ENCODE measurements at regions of chr6 and their contacts with region 1.

Region 1: DNA sequence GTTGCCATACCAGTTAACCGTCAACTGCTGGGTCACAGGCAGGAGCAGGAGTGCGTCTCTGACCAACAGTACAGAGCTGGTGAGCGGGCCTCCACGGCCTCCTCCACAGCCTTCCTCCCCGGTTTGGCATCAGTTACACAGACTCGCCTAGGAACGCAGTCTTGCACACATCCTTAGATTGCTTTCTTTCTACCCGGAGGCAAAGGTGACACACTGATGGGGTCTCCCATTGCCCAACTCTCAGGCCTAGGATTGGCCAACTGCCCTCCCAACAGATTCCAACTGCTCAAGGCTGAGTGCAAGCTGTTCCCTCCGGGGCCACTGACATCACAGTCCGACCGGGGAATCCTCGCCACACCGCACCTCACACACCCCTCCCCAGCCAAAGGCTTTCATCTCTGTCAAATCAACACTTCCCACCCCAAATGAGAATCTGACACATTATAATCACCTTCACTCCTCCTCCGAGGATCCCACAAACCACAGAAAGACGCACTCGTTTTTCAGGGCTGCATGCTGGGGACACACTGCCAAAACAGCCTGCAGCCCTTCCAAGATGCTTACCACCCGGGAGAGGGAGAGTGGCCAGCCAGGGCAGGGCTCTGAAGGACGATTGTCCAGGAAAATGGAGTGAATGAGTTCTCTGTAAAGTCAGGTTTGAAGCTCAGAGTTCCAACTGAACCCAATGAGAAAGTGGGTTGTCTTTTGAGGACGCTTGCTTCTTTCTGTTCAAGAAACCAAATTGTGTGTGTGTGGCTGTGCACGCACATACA is 63.1 kb downstream of the PDE10A start:
- DNase-seq: no peak
- ATAC-seq: peak in 3 of 8 donors; percentile 29 to 58 (median 45)
- H3K4me3 ChIP-seq: no peak overlapping the region
- H3K27ac ChIP-seq: no peak overlapping the region
- H3K4me1 ChIP-seq: peaks cover 0 to 27% (median 7%) of the 10 kb centered on the region in 9 donors
- H3K27me3 ChIP-seq: no peaks in the 10 kb centered on the region
- CTCF ChIP-seq: no peak

Region 2: DNA sequence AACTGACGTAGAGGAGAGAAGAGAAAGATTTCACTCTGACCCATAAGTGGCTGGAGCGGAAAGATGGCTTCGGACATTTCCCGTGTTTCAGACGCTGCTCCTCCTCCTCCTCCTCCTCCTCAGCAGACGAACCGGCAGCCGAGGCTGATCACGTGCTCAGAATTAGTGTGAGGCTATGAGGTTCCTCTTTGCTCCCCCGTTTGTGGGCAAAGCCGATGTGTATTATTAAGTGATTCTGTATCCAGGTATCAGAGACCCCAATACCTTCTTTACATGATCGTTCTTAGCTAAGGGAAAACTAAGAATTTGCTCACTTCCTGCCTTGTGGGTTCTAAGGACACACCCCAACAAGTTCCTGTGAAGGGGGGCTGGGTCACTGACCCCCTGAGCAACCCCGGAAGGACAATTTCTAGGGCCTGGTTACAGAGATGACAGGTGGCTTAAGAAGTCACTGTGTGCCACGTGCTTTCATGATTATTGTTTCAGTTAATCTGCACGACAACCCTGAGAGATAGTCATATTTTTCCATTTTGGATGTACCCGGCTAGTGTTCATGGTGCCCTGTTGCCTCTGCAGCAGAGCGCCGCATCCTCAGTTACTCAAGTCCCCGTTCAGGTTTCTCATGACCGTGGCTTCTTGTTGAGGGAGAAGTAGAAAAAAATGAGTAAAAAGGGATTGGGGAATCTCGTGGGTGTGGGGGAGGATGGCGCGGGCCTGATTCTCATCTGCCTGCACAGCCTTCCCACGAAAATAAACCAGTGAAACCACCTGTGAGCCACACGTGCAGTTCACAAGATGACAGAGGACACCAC is 1513.6 kb before region 1 on chr6:
- intact Hi-C with region 1: no loop called
- DNase-seq: no peak
- ATAC-seq: peak; percentile 34 to 68 (median 60)
- H3K4me3 ChIP-seq: peak overlapping the region in 5 of 10 donors; percentile 16 to 42 (median 24)
- H3K27ac ChIP-seq: peak overlapping the region; percentile 86 to 93 (median 92)
- H3K4me1 ChIP-seq: peaks cover 9 to 27% (median 20%) of the 10 kb centered on the region in 9 donors
- H3K27me3 ChIP-seq: no peaks in the 10 kb centered on the region
- CTCF ChIP-seq: no peak

Region 3: DNA sequence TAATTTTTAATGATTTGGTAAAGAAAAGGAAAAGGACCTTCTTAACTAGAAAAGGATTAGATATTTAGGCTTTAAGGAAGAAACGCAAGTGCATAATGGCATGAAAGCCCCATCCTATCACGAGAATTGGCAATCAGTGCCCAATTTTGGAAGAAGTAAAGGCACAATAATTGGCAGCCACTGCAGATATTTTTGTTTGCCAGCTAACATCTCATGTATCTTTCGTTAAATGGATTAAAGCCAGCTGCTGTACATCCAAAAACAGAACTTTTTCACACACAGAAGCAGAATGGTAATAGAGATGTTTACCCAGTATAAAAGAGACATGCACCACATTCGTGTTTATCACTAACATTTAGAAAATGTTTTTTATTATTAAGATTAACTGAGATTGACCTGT is 470.8 kb before region 1 on chr6:
- intact Hi-C with region 1: no loop called
- DNase-seq: no peak
- ATAC-seq: no peak
- H3K4me3 ChIP-seq: no peak overlapping the region
- H3K27ac ChIP-seq: no peak overlapping the region
- H3K4me1 ChIP-seq: no peaks in the 10 kb centered on the region
- H3K27me3 ChIP-seq: no peaks in the 10 kb centered on the region
- CTCF ChIP-seq: no peak

Region 4: GRCh38 chr6:166411721-166412151 is 811.8 kb after region 1 on chr6:
- intact Hi-C with region 1: loop called in 1 of 10 experiments (anchors 5 kb)
- DNase-seq: no peak
- ATAC-seq: no peak
- H3K4me3 ChIP-seq: no peak overlapping the region
- H3K27ac ChIP-seq: peak overlapping the region in 1 of 10 donors; percentile 44
- H3K4me1 ChIP-seq: no peaks in the 10 kb centered on the region
- H3K27me3 ChIP-seq: no peaks in the 10 kb centered on the region
- CTCF ChIP-seq: no peak

Measured in heart right ventricle (tissue), 16 donors.